Activated T-helper 1 cell treated with anti-CD3 and anti-CD28 coated beads, Interleukin-12 subunit alpha, Interleukin-12 subunit beta, Interleukin-2, Interleukin-4 antibody, amounts not matched to agents 30 ng/mL and 10 ng/mL and 1 ng/mL, durations not matched to agents 14 hours and 24 hours and 36 hours (primary cell): ENCODE measurements at regions of chr12 and their contacts with region 1.

Region 1: DNA sequence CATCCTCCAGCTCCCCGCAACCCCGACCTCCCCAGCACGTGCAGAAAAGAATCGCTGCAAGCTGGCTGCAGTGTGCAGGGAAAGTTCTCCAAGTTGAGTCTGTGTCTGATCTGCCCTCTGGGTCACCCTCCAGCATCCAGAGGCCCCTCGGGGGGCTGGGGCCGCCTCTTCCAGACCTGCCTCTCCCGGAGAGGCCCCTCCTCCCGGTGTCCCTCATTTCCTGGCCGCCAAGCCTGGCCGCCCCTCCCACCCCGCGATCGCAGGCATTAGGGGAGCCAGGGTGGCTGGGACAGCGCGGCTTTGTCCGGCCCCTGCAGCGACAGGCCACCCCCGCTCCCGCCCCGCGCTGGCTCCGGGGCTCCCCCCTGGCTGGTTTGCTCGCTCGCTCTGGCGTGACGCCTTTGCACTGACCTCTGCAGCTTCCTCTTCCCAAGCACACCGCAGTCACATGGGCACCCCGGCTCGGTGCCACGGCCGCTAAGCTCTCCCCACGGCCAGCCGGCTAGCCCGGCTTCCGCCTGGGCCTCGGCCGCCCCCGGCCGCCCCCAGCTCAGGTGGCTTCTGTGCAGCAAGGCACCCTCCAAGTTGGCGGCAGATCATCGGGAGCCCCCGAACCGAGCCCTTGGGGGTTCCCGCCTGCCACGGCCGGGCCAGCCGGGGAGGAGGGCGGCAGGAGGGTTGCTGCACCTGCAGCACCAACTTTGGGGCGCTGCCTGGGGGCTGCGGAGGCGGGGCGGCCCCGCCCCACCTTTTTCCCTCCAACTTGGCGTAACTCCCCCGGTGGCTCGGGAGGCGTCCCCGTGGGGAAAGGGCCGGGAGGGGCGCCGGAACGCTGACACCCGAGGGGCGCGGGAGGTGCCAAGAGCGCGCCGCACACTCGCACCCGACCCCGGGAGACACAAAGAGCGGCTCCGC is 43.7 kb downstream of the KDM2B start:
- DNase-seq: peak; percentile 41
- H3K4me3 Mint-ChIP-seq: peak overlapping the region; percentile 76
- H3K27ac Mint-ChIP-seq: peak overlapping the region; percentile 12
- H3K4me1 Mint-ChIP-seq: peaks cover 34% of the 10 kb centered on the region
- H3K27me3 Mint-ChIP-seq: peaks cover 4% of the 10 kb centered on the region

Region 2: GRCh38 chr12:121499929-121500793 is 37.0 kb before region 1 on chr12:
- intact Hi-C with region 1: loop called (anchors 5 kb)
- DNase-seq: peak; percentile 55
- H3K4me3 Mint-ChIP-seq: no peak overlapping the region
- H3K27ac Mint-ChIP-seq: no peak overlapping the region
- H3K4me1 Mint-ChIP-seq: peaks cover 12% of the 10 kb centered on the region
- H3K27me3 Mint-ChIP-seq: no peaks in the 10 kb centered on the region

Region 3: DNA sequence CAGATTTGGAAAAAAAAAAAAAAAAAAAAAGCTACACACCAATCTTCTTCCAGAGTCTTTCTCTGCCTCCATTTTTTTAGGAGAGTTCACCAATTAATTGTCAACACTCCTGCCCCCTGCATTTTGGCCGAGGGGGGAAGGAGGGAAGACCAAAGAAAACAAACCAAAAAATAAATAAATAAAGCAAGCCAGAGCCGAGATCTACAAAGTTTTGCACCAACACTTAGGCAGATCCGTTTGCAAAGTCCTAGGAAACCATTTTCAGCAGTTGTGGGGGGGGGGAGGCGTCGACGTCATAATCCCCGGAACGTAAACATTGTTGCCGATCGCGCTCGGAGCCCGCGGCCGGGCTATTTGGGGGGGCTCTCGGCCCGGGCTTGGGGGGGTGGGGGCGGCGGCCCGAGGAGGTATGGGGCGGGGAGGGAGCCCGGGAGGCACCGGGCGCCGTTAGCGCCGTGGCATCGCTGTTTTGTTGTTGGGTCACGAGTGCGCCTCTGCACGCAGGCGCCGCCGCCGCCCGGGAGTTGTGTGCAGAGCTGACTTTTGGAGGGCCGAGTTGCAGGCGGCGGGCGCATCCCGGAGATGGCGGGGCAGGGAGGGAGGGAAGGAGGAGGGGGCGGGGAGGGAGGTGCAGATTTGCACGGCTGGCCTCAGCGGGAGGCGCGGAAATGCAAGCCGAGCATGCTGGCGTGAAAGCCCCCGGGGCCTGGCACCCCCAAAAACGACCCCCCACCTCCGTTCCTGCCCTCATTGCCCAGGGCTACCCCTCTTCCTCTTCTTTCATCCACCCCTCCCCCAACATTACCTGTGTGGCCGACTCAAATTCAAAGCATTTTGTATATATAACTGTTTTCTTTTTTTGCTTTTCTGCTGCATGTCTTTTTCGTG is 43.1 kb after region 1 on chr12:
- intact Hi-C with region 1: loop called (anchors 5 kb)
- DNase-seq: peak; percentile 67
- H3K4me3 Mint-ChIP-seq: peak overlapping the region; percentile 98
- H3K27ac Mint-ChIP-seq: peak overlapping the region; percentile 100
- H3K4me1 Mint-ChIP-seq: peaks cover 40% of the 10 kb centered on the region
- H3K27me3 Mint-ChIP-seq: no peaks in the 10 kb centered on the region

Region 4: GRCh38 chr12:121590476-121591143 is 53.5 kb after region 1 on chr12:
- intact Hi-C with region 1: loop called (anchors 1 kb)
- DNase-seq: peak; percentile 64
- H3K4me3 Mint-ChIP-seq: peak overlapping the region; percentile 80
- H3K27ac Mint-ChIP-seq: peak overlapping the region; percentile 95
- H3K4me1 Mint-ChIP-seq: peaks cover 26% of the 10 kb centered on the region
- H3K27me3 Mint-ChIP-seq: no peaks in the 10 kb centered on the region